H1 (cell line): ENCODE measurements at regions of chr5 and their contacts with region 1.

Region 1: DNA sequence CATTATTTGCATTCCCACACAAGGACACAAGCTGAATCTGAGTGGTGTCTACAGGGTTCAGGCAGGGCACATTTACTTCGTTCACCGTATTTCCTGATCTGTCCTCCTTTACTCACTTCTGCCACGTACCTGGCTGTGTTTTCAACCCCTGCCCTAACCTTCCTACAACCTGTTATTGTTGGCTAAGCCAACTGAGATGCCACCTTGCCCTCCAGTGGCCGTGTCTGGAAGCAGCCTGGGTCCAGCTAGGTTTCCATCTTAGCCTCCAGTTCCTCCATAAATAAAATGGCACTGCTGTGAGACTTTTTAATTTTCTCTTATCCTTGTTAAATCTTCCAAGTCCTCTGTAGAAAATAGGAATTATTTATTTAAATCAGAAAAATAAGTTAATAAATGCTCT is 64.8 kb downstream of the ATP10B start:
- DNase-seq: peak; percentile 15 to 53
- H3K4me3 ChIP-seq: no peak overlapping the region
- H3K27ac ChIP-seq: no peak overlapping the region
- H3K4me1 ChIP-seq: no peaks in the 10 kb centered on the region
- H3K27me3 ChIP-seq: no peaks in the 10 kb centered on the region
- CTCF ChIP-seq: peak; percentile 86 to 88 (median 87)
- EP300 ChIP-seq: no peak
- POLR2A ChIP-seq: no peak
- RAD21 ChIP-seq: peak; percentile 89 to 94

Region 2: GRCh38 chr5:160508780-160509361 is 278.4 kb before region 1 on chr5:
- CTCF ChIA-PET with region 1: interaction called, 24 read pairs
- POLR2A ChIA-PET with region 1: no interaction called
- DNase-seq: peak; percentile 44 to 63
- H3K4me3 ChIP-seq: no peak overlapping the region
- H3K27ac ChIP-seq: no peak overlapping the region
- H3K4me1 ChIP-seq: 0 out of 7 replicates have a peak, but pooled peaks cover 0 to 5% (median 1%) of the 10 kb centered on the region in 4 experiments
- H3K27me3 ChIP-seq: no peaks in the 10 kb centered on the region
- CTCF ChIP-seq: peak; percentile 39 to 90 (median 87)
- EP300 ChIP-seq: no peak
- POLR2A ChIP-seq: no peak
- RAD21 ChIP-seq: peak; percentile 99 to 100

Region 3: GRCh38 chr5:160649304-160649703 is 137.9 kb before region 1 on chr5:
- CTCF ChIA-PET with region 1: interaction called, 16 read pairs
- POLR2A ChIA-PET with region 1: no interaction called
- DNase-seq: no peak
- H3K4me3 ChIP-seq: no peak overlapping the region
- H3K27ac ChIP-seq: no peak overlapping the region
- H3K4me1 ChIP-seq: no peaks in the 10 kb centered on the region
- H3K27me3 ChIP-seq: no peaks in the 10 kb centered on the region
- CTCF ChIP-seq: peak; percentile 51 to 76 (median 58)
- EP300 ChIP-seq: no peak
- POLR2A ChIP-seq: no peak
- RAD21 ChIP-seq: peak; percentile 75 to 79

Region 4: GRCh38 chr5:160675988-160676387 is 111.3 kb before region 1 on chr5:
- CTCF ChIA-PET with region 1: interaction called, 32 read pairs
- POLR2A ChIA-PET with region 1: no interaction called
- DNase-seq: no peak
- H3K4me3 ChIP-seq: no peak overlapping the region
- H3K27ac ChIP-seq: no peak overlapping the region
- H3K4me1 ChIP-seq: no peaks in the 10 kb centered on the region
- H3K27me3 ChIP-seq: peaks cover 0 to 1% (median 0%) of the 10 kb centered on the region in 4 experiments; a peak in 1 of 7 replicates
- CTCF ChIP-seq: no peak
- EP300 ChIP-seq: no peak
- POLR2A ChIP-seq: no peak
- RAD21 ChIP-seq: peak; percentile 4 to 25; a peak in 2 of 4 replicates

Region 5: DNA sequence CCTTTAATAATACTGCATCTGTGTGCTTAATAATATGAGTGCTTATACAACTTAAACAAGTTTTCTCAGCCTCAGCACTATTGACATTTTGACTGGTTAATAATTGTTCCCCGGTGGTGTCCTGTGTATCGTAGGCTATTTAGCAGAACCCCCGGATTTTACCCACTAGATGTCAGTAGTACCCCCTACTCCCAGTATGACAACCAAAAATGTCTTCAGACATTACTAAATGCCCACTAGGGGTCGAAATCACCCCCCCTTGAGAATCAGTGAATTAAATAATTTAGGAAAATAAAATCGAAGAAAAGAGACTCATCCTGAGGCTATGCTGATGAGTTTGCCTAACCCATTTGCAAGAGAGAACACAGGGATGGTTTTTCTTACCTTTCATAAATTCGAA is 101.5 kb before region 1 on chr5:
- CTCF ChIA-PET with region 1: interaction called, 32 read pairs
- POLR2A ChIA-PET with region 1: no interaction called
- DNase-seq: no peak
- H3K4me3 ChIP-seq: no peak overlapping the region
- H3K27ac ChIP-seq: no peak overlapping the region
- H3K4me1 ChIP-seq: no peaks in the 10 kb centered on the region
- H3K27me3 ChIP-seq: no peaks in the 10 kb centered on the region
- CTCF ChIP-seq: peak in 2 of 3 experiments; percentile 67 to 97; a peak in 3 of 4 replicates
- EP300 ChIP-seq: no peak
- POLR2A ChIP-seq: no peak
- RAD21 ChIP-seq: peak; percentile 85 to 86

Region 6: DNA sequence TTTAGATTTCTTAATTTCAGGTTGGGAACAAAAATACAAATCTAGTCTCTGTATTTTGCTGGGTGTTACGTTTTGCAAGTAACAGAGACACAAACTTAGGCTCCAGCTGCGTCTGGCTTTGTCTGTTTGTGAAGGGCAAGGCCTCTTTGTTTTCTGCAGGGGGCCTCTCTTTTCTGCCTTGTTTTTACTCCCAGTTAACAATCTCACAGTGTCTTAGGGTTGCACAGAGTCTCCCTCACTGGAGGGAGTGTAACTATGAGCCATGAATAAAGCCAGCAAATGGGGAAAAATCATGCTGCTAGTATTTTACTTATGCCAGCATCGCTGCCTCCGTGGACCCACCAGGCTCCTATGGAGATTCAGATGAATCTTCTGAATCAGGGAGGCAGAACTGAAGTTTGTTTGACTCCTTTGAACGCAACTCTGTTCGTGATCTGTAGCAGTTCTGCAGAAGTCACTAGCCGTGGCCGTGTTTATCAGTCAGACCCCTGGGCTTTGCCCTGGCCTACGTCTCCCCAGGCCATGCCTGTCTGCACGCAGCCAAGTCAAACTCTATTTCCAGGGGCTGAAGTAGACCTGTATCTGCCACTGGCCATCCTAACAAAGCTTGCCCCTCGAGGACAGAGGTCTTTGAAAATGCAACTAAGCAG is 12.4 kb before region 1 on chr5:
- CTCF ChIA-PET with region 1: interaction called, 23 read pairs
- POLR2A ChIA-PET with region 1: no interaction called
- DNase-seq: no peak
- H3K4me3 ChIP-seq: no peak overlapping the region
- H3K27ac ChIP-seq: no peak overlapping the region
- H3K4me1 ChIP-seq: peaks cover 5 to 12% (median 9%) of the 10 kb centered on the region in 4 experiments; a peak in 6 of 7 replicates
- H3K27me3 ChIP-seq: no peaks in the 10 kb centered on the region
- CTCF ChIP-seq: no peak
- EP300 ChIP-seq: no peak
- POLR2A ChIP-seq: no peak
- RAD21 ChIP-seq: no peak

Region 7: GRCh38 chr5:160802592-160802991 is 15.4 kb after region 1 on chr5:
- CTCF ChIA-PET with region 1: interaction called, 12 read pairs
- POLR2A ChIA-PET with region 1: no interaction called
- DNase-seq: no peak
- H3K4me3 ChIP-seq: no peak overlapping the region
- H3K27ac ChIP-seq: no peak overlapping the region
- H3K4me1 ChIP-seq: no peaks in the 10 kb centered on the region
- H3K27me3 ChIP-seq: no peaks in the 10 kb centered on the region
- CTCF ChIP-seq: peak in 1 of 3 experiments; percentile 33; a peak in 1 of 4 replicates
- EP300 ChIP-seq: no peak
- POLR2A ChIP-seq: no peak
- RAD21 ChIP-seq: peak; percentile 52 to 60